Breast epithelium (tissue), 4 donors: ENCODE measurements at regions of chr21 and their contacts with region 1.

Region 1: GRCh38 chr21:21324297-21324696 is 326.1 kb downstream of the NCAM2 start:
- DNase-seq: no peak
- H3K4me3 ChIP-seq: no peak overlapping the region
- H3K27ac ChIP-seq: no peak overlapping the region
- H3K4me1 ChIP-seq: no peaks in the 10 kb centered on the region
- H3K27me3 ChIP-seq: no peaks in the 10 kb centered on the region
- CTCF ChIP-seq: no peak
- POLR2A ChIP-seq: no peak

Region 2: DNA sequence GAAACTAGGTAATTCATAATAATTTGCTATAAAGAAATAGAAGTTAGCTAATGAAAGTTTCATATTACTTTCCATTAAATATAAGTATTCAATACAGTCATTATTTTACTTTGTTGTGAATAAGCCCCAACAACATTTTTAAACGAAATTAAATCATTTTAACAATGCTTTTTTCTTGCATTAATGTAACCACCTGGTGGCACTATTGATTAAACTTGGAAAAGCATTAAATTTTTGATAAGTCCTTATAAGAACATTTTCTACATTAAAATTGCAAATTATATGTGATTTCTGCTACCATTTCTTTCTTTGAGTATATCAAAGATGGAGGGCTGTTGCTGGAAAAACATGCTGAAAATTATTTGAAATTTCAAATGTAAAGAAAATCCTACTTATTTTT is 2001.9 kb before region 1 on chr21:
- intact Hi-C with region 1: no loop called
- DNase-seq: no peak
- H3K4me3 ChIP-seq: no peak overlapping the region
- H3K27ac ChIP-seq: no peak overlapping the region
- H3K4me1 ChIP-seq: no peaks in the 10 kb centered on the region
- H3K27me3 ChIP-seq: no peaks in the 10 kb centered on the region
- CTCF ChIP-seq: no peak
- POLR2A ChIP-seq: no peak

Region 3: GRCh38 chr21:21373969-21374368 is 49.7 kb after region 1 on chr21:
- intact Hi-C with region 1: loop called (anchors 2 kb)
- DNase-seq: no peak
- H3K4me3 ChIP-seq: no peak overlapping the region
- H3K27ac ChIP-seq: no peak overlapping the region
- H3K4me1 ChIP-seq: no peaks in the 10 kb centered on the region
- H3K27me3 ChIP-seq: no peaks in the 10 kb centered on the region
- CTCF ChIP-seq: peak in 1 of 3 donors; percentile 21
- POLR2A ChIP-seq: no peak

Region 4: DNA sequence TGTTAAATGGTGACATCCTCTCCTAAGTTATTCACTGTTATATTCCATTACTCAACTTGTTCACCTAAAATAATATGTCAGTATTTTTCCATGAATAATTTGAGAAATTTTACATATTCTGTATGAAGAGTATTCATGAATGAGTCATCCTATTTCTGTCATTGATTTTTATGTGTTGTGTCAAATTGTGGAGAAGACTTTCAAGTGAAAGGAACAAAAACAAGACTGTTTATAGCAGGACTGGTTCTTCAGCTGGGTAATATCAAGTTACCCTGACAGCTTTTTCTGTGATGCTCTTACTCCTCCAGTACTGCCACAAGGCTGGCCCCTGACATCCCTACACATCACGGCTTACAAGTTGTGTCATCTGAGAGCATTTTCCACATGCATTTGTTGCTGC is 521.6 kb after region 1 on chr21:
- intact Hi-C with region 1: no loop called
- DNase-seq: no peak
- H3K4me3 ChIP-seq: no peak overlapping the region
- H3K27ac ChIP-seq: no peak overlapping the region
- H3K4me1 ChIP-seq: no peaks in the 10 kb centered on the region
- H3K27me3 ChIP-seq: no peaks in the 10 kb centered on the region
- CTCF ChIP-seq: no peak
- POLR2A ChIP-seq: no peak